MCF 10A (cell line): ENCODE measurements at regions of chr20 and their contacts with region 1.

Region 1: GRCh38 chr20:13819885-13820645 is 35.2 kb downstream of the NDUFAF5 start:
- DNase-seq: peak; percentile 70
- H3K4me3 Mint-ChIP-seq: no peak overlapping the region
- H3K27ac Mint-ChIP-seq: no peak overlapping the region
- H3K4me1 Mint-ChIP-seq: no peaks in the 10 kb centered on the region
- H3K27me3 Mint-ChIP-seq: no peaks in the 10 kb centered on the region
- CTCF ChIP-seq: peak; percentile 46

Region 2: DNA sequence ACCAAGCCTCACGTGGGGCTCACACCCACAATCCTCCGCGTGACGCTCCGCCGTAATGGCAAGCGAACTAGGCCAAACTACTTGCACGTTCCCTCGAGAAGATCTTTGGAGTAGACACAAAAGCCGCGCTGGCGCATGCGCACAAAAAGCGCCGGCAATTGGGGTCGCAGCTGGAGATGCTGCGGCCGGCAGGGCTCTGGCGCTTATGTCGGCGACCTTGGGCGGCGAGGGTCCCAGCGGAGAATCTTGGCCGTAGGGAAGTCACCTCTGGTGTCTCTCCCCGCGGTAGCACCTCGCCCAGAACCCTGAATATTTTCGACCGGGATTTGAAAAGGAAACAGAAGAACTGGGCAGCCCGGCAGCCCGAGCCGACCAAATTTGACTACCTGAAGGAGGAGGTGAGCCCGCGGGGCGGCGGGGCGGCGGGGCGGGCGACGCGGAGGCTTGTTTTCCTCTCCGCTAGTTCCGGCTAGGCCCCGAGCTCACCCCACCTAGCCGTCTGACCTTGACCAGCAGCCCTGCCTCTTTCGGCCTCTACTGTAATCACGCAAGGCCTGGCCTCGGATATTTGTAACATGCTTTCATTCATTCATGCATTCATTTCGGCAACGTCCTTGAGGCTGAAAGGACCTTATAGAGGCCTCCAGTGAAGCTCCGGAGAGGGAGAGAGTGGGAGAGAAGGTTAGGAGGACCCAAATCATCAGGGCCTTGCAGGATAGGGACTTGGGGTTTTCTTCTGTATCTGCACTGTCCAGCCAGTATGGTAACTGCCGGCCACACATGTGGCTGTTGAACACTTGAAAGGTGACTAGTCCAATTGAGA is 35.0 kb before region 1 on chr20 and contains the starts of genes ESF1 and NDUFAF5:
- CTCF ChIA-PET with region 1: interaction called, 14 read pairs
- POLR2A ChIA-PET with region 1: interaction called, 16 read pairs
- intact Hi-C with region 1: no loop called
- DNase-seq: peak; percentile 97
- H3K4me3 Mint-ChIP-seq: peak within 1 kb of the TSS; percentile 87
- H3K27ac Mint-ChIP-seq: peak within 1 kb of the TSS; percentile 99
- H3K4me1 Mint-ChIP-seq: peaks cover 41% of the 10 kb centered on the region
- H3K27me3 Mint-ChIP-seq: no peaks in the 10 kb centered on the region
- CTCF ChIP-seq: no peak
- total RNA-seq, gene ESF1: 17.4 and 21.2 TPM in 2 replicates
- total RNA-seq, gene NDUFAF5: 43.4 and 44.1 TPM in 2 replicates

Region 3: GRCh38 chr20:13800728-13801134 is 19.3 kb before region 1 on chr20:
- CTCF ChIA-PET with region 1: interaction called, 100 read pairs
- POLR2A ChIA-PET with region 1: interaction called, 15 read pairs
- intact Hi-C with region 1: no loop called
- DNase-seq: peak; percentile 98
- H3K4me3 Mint-ChIP-seq: peak overlapping the region; percentile 39
- H3K27ac Mint-ChIP-seq: peak overlapping the region; percentile 7
- H3K4me1 Mint-ChIP-seq: peaks cover 21% of the 10 kb centered on the region
- H3K27me3 Mint-ChIP-seq: no peaks in the 10 kb centered on the region
- CTCF ChIP-seq: no peak

Region 4: GRCh38 chr20:13898011-13898612 is 78.0 kb after region 1 on chr20:
- CTCF ChIA-PET with region 1: interaction called, 10 read pairs
- POLR2A ChIA-PET with region 1: no interaction called
- intact Hi-C with region 1: no loop called
- DNase-seq: peak; percentile 20
- H3K4me3 Mint-ChIP-seq: no peak overlapping the region
- H3K27ac Mint-ChIP-seq: no peak overlapping the region
- H3K4me1 Mint-ChIP-seq: no peaks in the 10 kb centered on the region
- H3K27me3 Mint-ChIP-seq: no peaks in the 10 kb centered on the region
- CTCF ChIP-seq: no peak

Region 5: GRCh38 chr20:14036567-14036966 is 216.5 kb after region 1 on chr20:
- CTCF ChIA-PET with region 1: interaction called, 36 read pairs
- POLR2A ChIA-PET with region 1: no interaction called
- intact Hi-C with region 1: no loop called
- DNase-seq: no peak
- H3K4me3 Mint-ChIP-seq: no peak overlapping the region
- H3K27ac Mint-ChIP-seq: no peak overlapping the region
- H3K4me1 Mint-ChIP-seq: no peaks in the 10 kb centered on the region
- H3K27me3 Mint-ChIP-seq: no peaks in the 10 kb centered on the region
- CTCF ChIP-seq: no peak

Region 6: GRCh38 chr20:14055127-14055742 is 235.2 kb after region 1 on chr20:
- CTCF ChIA-PET with region 1: interaction called, 154 read pairs
- POLR2A ChIA-PET with region 1: interaction called, 28 read pairs
- intact Hi-C with region 1: loop called (anchors 1 kb)
- DNase-seq: peak; percentile 79
- H3K4me3 Mint-ChIP-seq: no peak overlapping the region
- H3K27ac Mint-ChIP-seq: no peak overlapping the region
- H3K4me1 Mint-ChIP-seq: no peaks in the 10 kb centered on the region
- H3K27me3 Mint-ChIP-seq: no peaks in the 10 kb centered on the region
- CTCF ChIP-seq: peak; percentile 50